ENCODE measurements at regions of chr10 and their contacts with region 1.

Region 1: DNA sequence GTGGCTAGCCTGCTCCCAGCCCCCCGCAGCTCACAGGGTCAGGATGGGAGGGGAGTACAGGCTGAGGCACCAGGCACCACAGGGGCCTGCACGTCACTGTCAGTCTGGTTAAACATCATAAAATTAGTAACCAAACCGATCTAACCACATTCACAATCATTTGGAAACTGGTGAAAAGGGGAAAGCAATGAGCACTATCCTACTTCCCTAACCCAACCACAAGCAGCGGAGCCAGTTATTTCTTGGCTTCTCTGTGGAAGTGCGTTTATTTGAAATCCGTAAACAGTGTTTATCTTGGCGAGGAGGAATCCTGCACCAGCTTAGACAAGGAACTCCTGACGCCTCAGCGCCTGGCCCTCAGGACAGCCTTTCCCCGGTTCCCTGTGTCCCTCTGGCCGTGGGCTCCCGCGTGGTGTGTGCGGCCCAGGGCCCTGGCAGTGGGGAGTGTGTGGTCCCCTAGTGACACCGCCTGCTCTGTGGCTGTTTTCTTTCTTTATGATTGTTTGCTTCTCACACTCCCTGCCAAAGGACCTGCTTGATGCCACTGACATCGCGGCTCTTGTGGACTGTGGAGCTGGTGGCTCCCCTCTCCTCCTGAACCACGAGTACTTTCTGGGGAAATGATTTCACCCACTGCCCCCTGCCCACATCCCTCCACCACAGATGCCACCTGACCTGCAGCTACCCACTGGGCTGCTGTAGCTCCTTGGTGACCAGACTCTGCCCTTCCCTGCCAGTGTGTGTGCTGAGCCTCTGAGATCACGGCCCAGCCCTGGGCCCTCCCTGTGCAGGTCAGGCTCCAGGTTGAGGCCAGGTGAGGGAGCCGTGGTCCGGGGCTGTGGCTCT is 38.0 kb downstream of the INPP5A start:
- DNase-seq: no peak

Region 2: GRCh38 chr10:132506711-132507408 is 68.7 kb before region 1 on chr10:
- intact Hi-C with region 1: loop called (anchors 5 kb)
- DNase-seq: peak; percentile 63

Region 3: GRCh38 chr10:132536971-132537712 is 38.4 kb before region 1 on chr10:
- intact Hi-C with region 1: loop called (anchors 5 kb)
- DNase-seq: peak; percentile 100

Region 4: GRCh38 chr10:132893090-132893489 is 317.5 kb after region 1 on chr10:
- intact Hi-C with region 1: no loop called
- DNase-seq: peak; percentile 70

Measured in cardiac septum (tissue), 1 donor.